CD8-positive, alpha-beta T cell (primary cell): ENCODE measurements at regions of chr1 and their contacts with region 1.

Region 1: DNA sequence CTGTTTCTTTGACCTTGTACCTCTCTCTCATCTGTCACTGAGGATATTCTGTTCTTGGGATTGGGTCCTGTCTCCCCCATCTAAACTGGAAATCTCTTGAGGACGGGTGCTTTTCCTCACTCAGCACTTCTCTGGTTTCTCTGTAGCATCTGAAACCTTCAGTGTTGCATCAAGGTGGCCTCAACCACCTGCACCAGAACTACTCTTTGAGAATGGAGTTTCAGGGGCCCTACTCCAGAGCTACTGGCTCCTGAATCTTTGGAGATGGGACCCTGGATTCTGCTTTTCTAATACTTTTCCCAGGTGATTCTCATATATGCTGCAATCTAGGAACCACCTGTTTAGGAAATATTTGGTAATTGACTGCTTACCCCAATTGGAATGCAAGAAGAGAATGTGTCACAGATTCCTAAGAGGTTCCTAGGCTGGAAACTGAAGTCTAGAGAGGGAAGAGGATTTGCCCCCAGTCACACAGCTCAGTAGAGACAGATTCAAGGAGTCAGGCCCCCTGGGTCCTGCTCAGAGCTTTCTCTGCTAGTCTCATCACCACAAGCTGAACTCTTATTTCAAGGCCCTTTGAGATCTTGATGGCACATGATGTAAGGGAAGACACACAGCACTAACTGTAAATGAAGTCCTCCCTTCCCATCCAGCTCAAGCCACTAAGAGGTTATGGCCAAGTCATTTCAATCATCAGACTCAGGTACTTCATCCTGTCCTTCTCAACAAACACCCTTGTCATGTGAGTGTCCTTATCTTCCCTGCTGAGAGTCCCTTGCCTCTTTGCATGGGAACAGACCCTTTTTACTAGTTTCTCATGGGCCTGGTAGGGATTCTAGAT is 48.7 kb downstream of the EIF2D start:
- DNase-seq: no peak
- ATAC-seq: peak; percentile 8
- H3K4me3 ChIP-seq: peak overlapping the region; percentile 0 to 40
- H3K4me3 Mint-ChIP-seq: peak overlapping the region; percentile 83
- H3K27ac ChIP-seq: peak overlapping the region; percentile 17 to 56
- H3K27ac Mint-ChIP-seq: peak overlapping the region; percentile 95
- H3K4me1 ChIP-seq: peaks cover 90% of the 10 kb centered on the region
- H3K4me1 Mint-ChIP-seq: peaks cover 95% of the 10 kb centered on the region
- H3K27me3 ChIP-seq: no peaks in the 10 kb centered on the region
- H3K27me3 Mint-ChIP-seq: no peaks in the 10 kb centered on the region
- CTCF ChIP-seq: no peak

Region 2: GRCh38 chr1:206551986-206552326 is 11.6 kb before region 1 on chr1:
- CTCF ChIA-PET with region 1: interaction called, 709 read pairs
- POLR2A ChIA-PET with region 1: interaction called, 24 read pairs
- intact Hi-C with region 1: loop called (anchors 1 kb)
- DNase-seq: peak; percentile 60 to 96 (median 76)
- ATAC-seq: peak; percentile 83
- H3K4me3 ChIP-seq: no peak overlapping the region
- H3K4me3 Mint-ChIP-seq: peak overlapping the region; percentile 55
- H3K27ac ChIP-seq: peak overlapping the region; percentile 33 to 84
- H3K27ac Mint-ChIP-seq: peak overlapping the region; percentile 95
- H3K4me1 ChIP-seq: peaks cover 54% of the 10 kb centered on the region
- H3K4me1 Mint-ChIP-seq: peaks cover 69% of the 10 kb centered on the region
- H3K27me3 ChIP-seq: no peaks in the 10 kb centered on the region
- H3K27me3 Mint-ChIP-seq: no peaks in the 10 kb centered on the region
- CTCF ChIP-seq: no peak

Region 3: GRCh38 chr1:206575165-206575893 is 11.7 kb after region 1 on chr1:
- CTCF ChIA-PET with region 1: interaction called, 709 read pairs
- POLR2A ChIA-PET with region 1: interaction called, 320 read pairs
- intact Hi-C with region 1: loop called (anchors 1 kb)
- DNase-seq: peak in 6 of 9 experiments; percentile 49 to 90 (median 70)
- ATAC-seq: peak; percentile 55
- H3K4me3 ChIP-seq: peak overlapping the region; percentile 27 to 32
- H3K4me3 Mint-ChIP-seq: peak overlapping the region; percentile 71
- H3K27ac ChIP-seq: peak overlapping the region; percentile 59 to 95
- H3K27ac Mint-ChIP-seq: peak overlapping the region; percentile 96
- H3K4me1 ChIP-seq: peaks cover 98% of the 10 kb centered on the region
- H3K4me1 Mint-ChIP-seq: peaks cover 95% of the 10 kb centered on the region
- H3K27me3 ChIP-seq: no peaks in the 10 kb centered on the region
- H3K27me3 Mint-ChIP-seq: no peaks in the 10 kb centered on the region
- CTCF ChIP-seq: no peak

Region 4: DNA sequence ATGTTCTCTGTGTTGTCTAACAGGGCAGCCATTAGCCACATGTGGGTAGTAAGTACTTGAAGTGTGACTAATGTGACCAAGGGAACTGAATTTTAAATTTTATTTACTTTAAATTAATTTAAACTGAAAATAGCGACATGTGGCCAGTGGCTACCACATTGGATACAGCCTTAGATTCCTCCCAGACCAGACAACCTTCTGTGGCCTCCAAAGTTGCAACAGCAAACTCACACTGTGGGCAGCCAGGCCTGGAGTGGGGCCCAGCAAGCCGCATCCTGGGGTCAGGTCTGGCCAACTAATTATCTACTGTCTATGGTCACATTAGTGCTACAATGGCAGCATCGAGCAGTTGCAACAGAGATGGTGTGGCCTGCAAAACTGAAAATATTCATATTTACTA is 36.9 kb after region 1 on chr1:
- CTCF ChIA-PET with region 1: no interaction called
- POLR2A ChIA-PET with region 1: no interaction called
- intact Hi-C with region 1: no loop called
- DNase-seq: no peak
- ATAC-seq: no peak
- H3K4me3 ChIP-seq: no peak overlapping the region
- H3K4me3 Mint-ChIP-seq: no peak overlapping the region
- H3K27ac ChIP-seq: no peak overlapping the region
- H3K27ac Mint-ChIP-seq: no peak overlapping the region
- H3K4me1 ChIP-seq: no peaks in the 10 kb centered on the region
- H3K4me1 Mint-ChIP-seq: no peaks in the 10 kb centered on the region
- H3K27me3 ChIP-seq: no peaks in the 10 kb centered on the region
- H3K27me3 Mint-ChIP-seq: no peaks in the 10 kb centered on the region
- CTCF ChIP-seq: no peak

Region 5: DNA sequence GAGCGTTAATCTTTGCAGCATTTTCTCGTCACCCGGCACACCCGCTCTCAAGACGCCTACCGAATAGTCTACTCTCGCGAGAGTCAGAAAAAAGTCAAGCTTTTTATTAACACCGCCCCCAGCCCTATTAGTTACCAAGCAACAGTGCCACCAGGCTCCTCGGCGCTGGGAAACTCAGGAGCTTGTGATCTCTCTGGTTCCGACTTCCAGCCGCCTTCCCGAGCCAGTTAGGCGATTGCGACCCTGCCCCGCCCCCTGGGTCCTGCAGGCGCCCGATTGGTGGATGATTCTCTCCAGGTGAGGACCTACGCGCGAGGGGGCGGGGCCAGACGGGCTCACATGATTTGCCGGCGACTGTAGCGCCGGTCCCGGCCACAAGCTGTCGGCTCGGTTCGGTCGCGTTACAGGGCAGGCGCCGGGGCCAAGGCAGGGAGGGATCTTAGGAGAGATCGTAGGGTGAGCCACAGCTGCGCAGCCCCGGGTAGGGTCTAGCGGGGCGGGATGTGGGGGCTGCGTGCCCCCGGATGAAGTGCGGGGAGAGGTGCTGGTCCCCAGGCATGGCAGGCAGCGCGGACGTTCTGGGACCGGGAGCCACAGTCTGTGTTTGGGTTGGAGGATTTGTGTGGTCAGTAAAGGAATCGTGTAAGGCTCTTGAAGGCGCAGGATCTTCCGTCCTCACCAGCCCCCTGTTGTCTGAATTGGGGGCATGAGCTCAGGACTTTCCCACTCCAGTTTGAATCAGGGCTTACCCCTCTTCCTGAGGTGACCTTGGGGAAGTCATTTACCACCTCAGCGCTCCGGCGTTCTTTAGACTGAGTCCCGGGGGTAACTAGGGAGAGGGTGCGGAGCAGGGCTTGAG is 489.6 kb after region 1 on chr1 and contains the start of gene PFKFB2:
- CTCF ChIA-PET with region 1: no interaction called
- POLR2A ChIA-PET with region 1: no interaction called
- intact Hi-C with region 1: loop called in 1 of 2 experiments (anchors 5 kb)
- DNase-seq: peak; percentile 88 to 97 (median 95)
- ATAC-seq: peak; percentile 87
- H3K4me3 ChIP-seq: peak within 1 kb of the TSS; percentile 70 to 82
- H3K4me3 Mint-ChIP-seq: peak within 1 kb of the TSS; percentile 97
- H3K27ac ChIP-seq: peak within 1 kb of the TSS; percentile 70 to 83
- H3K27ac Mint-ChIP-seq: peak within 1 kb of the TSS; percentile 98
- H3K4me1 ChIP-seq: peaks cover 28% of the 10 kb centered on the region
- H3K4me1 Mint-ChIP-seq: peaks cover 44% of the 10 kb centered on the region
- H3K27me3 ChIP-seq: no peaks in the 10 kb centered on the region
- H3K27me3 Mint-ChIP-seq: no peaks in the 10 kb centered on the region
- CTCF ChIP-seq: peak; percentile 21
- total RNA-seq, gene PFKFB2: 8.1 to 8.5 TPM